Ovary (tissue), 10 donors: ENCODE measurements at regions of chr7 and their contacts with region 1.

Region 1: DNA sequence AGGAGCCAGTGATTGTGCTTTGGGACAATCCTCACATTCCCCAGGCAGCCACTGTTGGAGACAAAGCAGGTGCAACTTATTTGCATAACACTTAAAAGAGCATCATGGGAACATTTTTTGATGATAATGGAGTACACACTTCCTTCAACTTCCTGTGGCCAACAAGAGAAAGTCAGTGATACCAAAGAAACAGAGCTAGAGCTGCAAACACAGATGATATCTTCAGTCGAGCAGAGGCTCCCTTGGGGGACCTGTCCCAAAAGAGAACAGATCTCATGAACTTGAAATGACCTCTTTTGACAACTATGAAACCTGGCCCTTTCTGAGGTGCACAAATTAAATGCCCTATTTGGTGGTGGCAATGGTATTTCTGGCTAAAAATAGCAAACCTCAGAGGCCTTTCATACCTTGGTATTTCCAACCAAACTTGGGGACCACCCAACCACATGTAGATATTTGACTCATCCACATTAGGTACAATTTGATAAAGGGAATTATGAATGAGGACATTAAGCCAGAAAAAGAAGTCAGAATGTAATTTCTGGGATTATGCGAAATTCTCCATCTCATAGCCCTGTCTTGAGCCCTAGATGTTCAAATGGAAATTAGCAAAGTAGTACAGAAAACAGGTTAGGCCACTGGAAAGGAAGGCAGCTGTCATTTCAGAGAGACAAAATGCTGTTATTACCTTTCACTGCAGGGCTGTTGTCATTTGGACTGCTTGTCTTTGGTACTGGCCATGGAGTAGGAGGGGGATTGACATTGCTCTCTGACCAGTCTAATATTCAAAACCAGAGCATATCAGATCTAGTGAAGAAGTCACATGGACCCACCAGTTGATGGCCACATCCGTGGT is 146.2 kb downstream of the ICA1 start:
- DNase-seq: no peak
- H3K4me3 ChIP-seq: no peak overlapping the region
- H3K27ac ChIP-seq: no peak overlapping the region
- H3K4me1 ChIP-seq: no peaks in the 10 kb centered on the region
- H3K27me3 ChIP-seq: no peaks in the 10 kb centered on the region
- CTCF ChIP-seq: no peak
- EP300 ChIP-seq: no peak
- POLR2A ChIP-seq: no peak

Region 2: DNA sequence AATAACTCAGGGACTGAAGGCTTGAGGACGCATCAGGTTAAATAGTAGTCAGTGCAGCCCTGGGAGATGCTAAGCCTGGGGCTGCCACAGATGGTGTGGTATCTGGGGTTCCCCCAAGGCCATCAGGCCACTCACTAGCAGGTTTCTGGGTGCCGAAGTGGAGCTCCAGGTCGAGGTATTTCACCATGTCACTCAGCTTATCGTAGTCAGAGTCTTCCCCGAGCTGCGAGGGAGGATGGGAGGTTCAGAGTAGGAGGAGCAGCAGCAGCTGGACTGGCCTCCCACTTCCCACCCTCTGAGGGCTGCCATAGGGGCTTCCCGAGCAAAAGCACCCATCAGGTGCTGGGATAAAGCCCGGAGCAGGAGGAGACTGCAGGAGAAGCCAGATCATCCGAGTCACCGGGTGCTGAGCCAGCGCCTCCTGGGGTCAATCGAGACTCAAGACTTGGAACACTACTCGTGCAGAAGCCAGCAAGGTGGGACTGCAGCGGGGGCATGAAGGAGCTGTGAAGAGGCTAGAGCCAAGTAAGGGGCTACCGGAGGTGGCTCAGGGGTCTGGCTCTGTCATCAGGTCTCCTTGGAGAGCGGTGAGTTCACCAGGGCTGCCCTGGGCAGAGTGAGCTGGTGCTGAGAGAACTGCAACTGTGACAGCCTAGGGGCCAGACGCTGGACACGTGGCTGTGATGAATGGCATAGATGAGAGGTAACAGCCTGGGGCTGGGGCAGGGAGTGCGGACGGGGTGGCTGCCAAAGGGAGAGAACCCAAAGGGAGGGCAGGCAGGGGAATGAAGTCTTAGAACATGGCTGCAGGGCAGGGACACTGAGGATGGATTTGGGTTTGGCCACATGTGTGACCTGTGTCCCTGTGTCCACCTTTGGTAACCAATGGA is 1609.8 kb before region 1 on chr7:
- intact Hi-C with region 1: loop called in 1 of 4 experiments (anchors 5 kb)
- DNase-seq: no peak
- H3K4me3 ChIP-seq: no peak overlapping the region
- H3K27ac ChIP-seq: no peak overlapping the region
- H3K4me1 ChIP-seq: peaks cover 5% of the 10 kb centered on the region
- H3K27me3 ChIP-seq: no peaks in the 10 kb centered on the region
- CTCF ChIP-seq: no peak
- EP300 ChIP-seq: no peak
- POLR2A ChIP-seq: no peak

Region 3: GRCh38 chr7:8161364-8161828 is 45.6 kb after region 1 on chr7:
- intact Hi-C with region 1: no loop called
- DNase-seq: no peak
- H3K4me3 ChIP-seq: no peak overlapping the region
- H3K27ac ChIP-seq: no peak overlapping the region
- H3K4me1 ChIP-seq: no peaks in the 10 kb centered on the region
- H3K27me3 ChIP-seq: no peaks in the 10 kb centered on the region
- CTCF ChIP-seq: no peak
- EP300 ChIP-seq: no peak
- POLR2A ChIP-seq: no peak